ENCODE measurements at regions of chr10 and their contacts with region 1.

Region 1: DNA sequence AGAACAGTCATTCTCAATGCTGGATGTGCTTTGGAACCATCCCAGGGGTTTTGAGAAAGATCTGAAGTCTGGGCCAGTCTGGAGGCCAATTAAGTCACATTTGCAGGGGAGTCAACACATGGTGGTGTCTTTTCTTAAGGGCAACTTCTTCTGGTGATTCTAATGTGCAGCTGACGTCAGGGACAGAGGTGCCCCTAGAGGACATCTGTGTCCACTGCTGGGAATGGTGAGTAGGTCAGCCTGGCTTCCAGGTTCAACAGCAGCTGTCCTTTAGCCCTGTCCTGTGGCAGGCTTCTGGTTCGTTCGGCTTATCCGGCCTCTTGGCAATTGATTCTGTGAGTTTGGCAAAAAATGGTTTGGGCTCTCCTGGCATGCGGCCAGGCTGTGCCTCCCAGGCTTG is 269.7 kb upstream of the HABP2 start:
- DNase-seq: no peak

Region 2: GRCh38 chr10:111944331-111944730 is 1338.9 kb before region 1 on chr10:
- intact Hi-C with region 1: loop called in 1 of 2 experiments (anchors 10 kb)
- DNase-seq: no peak

Region 3: GRCh38 chr10:113454341-113455061 is 171.3 kb after region 1 on chr10:
- intact Hi-C with region 1: loop called in 1 of 2 experiments (anchors 10 kb)
- DNase-seq: peak; percentile 83

Region 4: DNA sequence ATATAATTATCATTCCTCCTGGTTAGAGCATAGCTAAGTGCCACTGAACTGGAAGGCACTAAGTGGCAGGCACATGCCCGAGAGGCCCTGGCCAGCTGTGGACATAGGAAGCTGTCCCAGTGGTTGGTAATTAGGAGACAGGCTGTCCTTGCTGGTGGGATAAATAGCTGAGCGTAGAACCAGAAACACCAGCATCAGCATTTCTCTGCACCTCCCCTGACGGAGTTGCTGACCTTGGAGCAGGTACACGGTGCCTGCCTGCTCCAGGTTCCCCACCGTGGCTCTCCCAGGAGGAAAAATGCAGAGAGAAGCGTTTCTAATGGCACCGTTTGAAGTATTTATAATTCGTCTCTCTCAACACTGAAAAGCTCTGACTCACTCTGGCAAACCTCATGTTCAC is 1380.4 kb after region 1 on chr10:
- intact Hi-C with region 1: no loop called
- DNase-seq: no peak

Measured in posterior vena cava (tissue), 2 donors.